Left cardiac atrium (tissue), 4 donors: ENCODE measurements at regions of chr13 and their contacts with region 1.

Region 1: DNA sequence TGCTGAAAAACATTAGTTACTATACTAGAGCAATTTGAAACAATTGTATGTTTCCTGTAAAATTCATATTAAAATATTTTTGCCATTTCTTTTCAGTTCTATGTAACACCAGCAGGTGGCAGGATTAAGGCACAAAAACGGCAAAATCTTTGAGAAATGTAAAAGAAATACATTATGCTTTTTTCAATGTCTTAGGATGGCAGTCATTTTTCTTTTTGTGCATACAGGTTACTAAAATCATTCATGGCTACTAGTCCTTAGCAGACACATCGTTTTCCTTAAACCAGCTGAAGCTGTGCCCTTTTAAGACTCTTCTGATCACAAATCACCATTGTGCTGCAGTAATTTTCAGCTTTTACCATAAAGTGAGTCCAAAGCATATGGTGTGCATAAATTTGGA is 800.7 kb upstream of the SLITRK5 start:
- DNase-seq: no peak
- ATAC-seq: no peak

Region 2: GRCh38 chr13:86810361-86810760 is 60.1 kb before region 1 on chr13:
- intact Hi-C with region 1: no loop called
- DNase-seq: no peak
- ATAC-seq: no peak

Region 3: GRCh38 chr13:87274209-87274819 is 403.9 kb after region 1 on chr13:
- intact Hi-C with region 1: loop called (anchors 10 kb)
- DNase-seq: no peak
- ATAC-seq: no peak